ENCODE measurements at regions of chr7 and their contacts with region 1.

Region 1: GRCh38 chr7:112481833-112482670 is 1.3 kb downstream of the LSMEM1 start:
- DNase-seq: peak; percentile 85
- ATAC-seq: peak; percentile 78
- H3K4me3 ChIP-seq: no peak overlapping the region
- H3K27ac ChIP-seq: peak overlapping the region; percentile 89
- H3K4me1 ChIP-seq: peaks cover 43% of the 10 kb centered on the region
- H3K27me3 ChIP-seq: no peaks in the 10 kb centered on the region
- CTCF ChIP-seq: no peak

Region 2: GRCh38 chr7:111741811-111742240 is 740.2 kb before region 1 on chr7:
- CTCF ChIA-PET with region 1: no interaction called
- POLR2A ChIA-PET with region 1: no interaction called
- intact Hi-C with region 1: loop called (anchors 5 kb)
- DNase-seq: peak; percentile 78
- ATAC-seq: peak; percentile 86
- H3K4me3 ChIP-seq: no peak overlapping the region
- H3K27ac ChIP-seq: no peak overlapping the region
- H3K4me1 ChIP-seq: peaks cover under 1% of the 10 kb centered on the region; the same call in 1 of the 2 replicates
- H3K27me3 ChIP-seq: no peaks in the 10 kb centered on the region
- CTCF ChIP-seq: peak; percentile 81

Region 3: GRCh38 chr7:111763221-111763801 is 718.7 kb before region 1 on chr7:
- CTCF ChIA-PET with region 1: no interaction called
- POLR2A ChIA-PET with region 1: no interaction called
- intact Hi-C with region 1: loop called (anchors 5 kb)
- DNase-seq: peak; percentile 55
- ATAC-seq: peak; percentile 84
- H3K4me3 ChIP-seq: no peak overlapping the region
- H3K27ac ChIP-seq: no peak overlapping the region
- H3K4me1 ChIP-seq: peaks cover 6% of the 10 kb centered on the region
- H3K27me3 ChIP-seq: no peaks in the 10 kb centered on the region
- CTCF ChIP-seq: peak; percentile 71

Region 4: GRCh38 chr7:112422842-112423496 is 59.1 kb before region 1 on chr7:
- CTCF ChIA-PET with region 1: no interaction called
- POLR2A ChIA-PET with region 1: no interaction called
- intact Hi-C with region 1: loop called (anchors 5 kb)
- DNase-seq: peak; percentile 98
- ATAC-seq: peak; percentile 95
- H3K4me3 ChIP-seq: peak overlapping the region; percentile 30; the same call in 1 of the 2 replicates
- H3K27ac ChIP-seq: peak overlapping the region; percentile 70
- H3K4me1 ChIP-seq: peaks cover 37% of the 10 kb centered on the region
- H3K27me3 ChIP-seq: no peaks in the 10 kb centered on the region
- CTCF ChIP-seq: no peak

Region 5: GRCh38 chr7:112449902-112450806 is 31.9 kb before region 1 on chr7 and contains the start of gene IFRD1:
- CTCF ChIA-PET with region 1: no interaction called
- POLR2A ChIA-PET with region 1: interaction called, 7 read pairs
- intact Hi-C with region 1: loop called (anchors 2 kb)
- DNase-seq: peak; percentile 97
- ATAC-seq: peak; percentile 85
- H3K4me3 ChIP-seq: peak within 1 kb of the TSS; percentile 96
- H3K27ac ChIP-seq: peak within 1 kb of the TSS; percentile 80
- H3K4me1 ChIP-seq: peaks cover 29% of the 10 kb centered on the region
- H3K27me3 ChIP-seq: no peaks in the 10 kb centered on the region
- CTCF ChIP-seq: no peak
- total RNA-seq, gene IFRD1: 72.6 and 73.4 TPM in 2 replicates

Region 6: GRCh38 chr7:112556633-112557032 is 74.6 kb after region 1 on chr7:
- CTCF ChIA-PET with region 1: no interaction called
- POLR2A ChIA-PET with region 1: no interaction called
- intact Hi-C with region 1: no loop called
- DNase-seq: peak; percentile 76
- ATAC-seq: peak; percentile 68
- H3K4me3 ChIP-seq: no peak overlapping the region
- H3K27ac ChIP-seq: no peak overlapping the region
- H3K4me1 ChIP-seq: no peaks in the 10 kb centered on the region
- H3K27me3 ChIP-seq: peaks cover 15% of the 10 kb centered on the region
- CTCF ChIP-seq: no peak

Measured in PC-3 (cell line).